HCT116 (cell line): ENCODE measurements at regions of chr17 and their contacts with region 1.

Region 1: DNA sequence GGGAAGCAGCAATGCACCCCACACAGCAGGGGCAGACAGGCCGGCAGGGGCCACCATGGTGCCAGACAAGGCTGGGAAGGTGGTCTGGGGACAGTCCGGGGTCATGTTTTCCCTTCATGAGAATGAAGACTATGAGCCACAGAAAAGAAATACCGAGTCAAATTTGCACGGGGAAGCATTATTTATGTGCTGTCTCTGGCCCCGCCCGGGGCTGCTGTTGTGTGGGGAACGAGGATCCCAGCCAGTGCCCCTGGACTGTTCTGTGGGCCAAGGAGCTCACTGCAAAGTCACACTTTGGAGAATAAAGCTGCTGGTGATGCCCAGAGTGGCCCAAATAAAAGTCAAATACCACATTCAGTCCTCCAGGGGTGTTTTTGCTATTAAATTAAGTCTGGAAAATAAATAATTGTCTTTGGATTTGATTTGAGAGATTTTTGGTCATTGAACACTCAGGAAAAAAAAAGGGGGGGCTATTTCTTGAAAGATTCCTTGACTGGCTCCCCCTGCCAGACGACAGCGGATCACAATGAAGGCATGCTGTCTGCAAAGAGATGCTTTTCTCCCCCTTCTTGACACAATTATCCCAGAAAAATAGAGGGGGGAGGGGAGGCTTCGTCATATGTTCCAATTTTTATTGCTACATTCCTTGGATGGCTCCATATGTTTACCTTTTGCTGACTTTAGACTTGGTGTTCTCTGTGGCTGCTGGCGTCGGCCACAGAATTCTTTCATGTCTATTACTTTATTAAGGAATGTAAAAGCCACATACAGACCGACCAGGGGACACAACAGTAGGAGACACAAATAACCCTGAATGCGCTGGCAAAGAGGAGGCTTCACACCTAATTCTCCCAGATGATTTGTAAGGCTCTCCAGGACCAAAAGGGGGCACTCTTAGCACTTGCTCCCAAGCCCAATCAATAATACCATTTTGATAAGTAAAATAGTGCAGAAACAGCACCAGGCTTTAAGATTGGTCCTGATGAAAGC is 27.1 kb upstream of the ANKFN1 start:
- DNase-seq: peak; percentile 52
- ATAC-seq: peak; percentile 75
- H3K4me3 ChIP-seq: no peak overlapping the region
- H3K27ac ChIP-seq: no peak overlapping the region
- H3K4me1 ChIP-seq: no peaks in the 10 kb centered on the region
- H3K27me3 ChIP-seq: peaks cover 30% of the 10 kb centered on the region
- CTCF ChIP-seq: peak; percentile 63 to 81 (median 74); a peak in 5 of 6 replicates
- POLR2A ChIP-seq: no peak
- RAD21 ChIP-seq: peak; percentile 74

Region 2: DNA sequence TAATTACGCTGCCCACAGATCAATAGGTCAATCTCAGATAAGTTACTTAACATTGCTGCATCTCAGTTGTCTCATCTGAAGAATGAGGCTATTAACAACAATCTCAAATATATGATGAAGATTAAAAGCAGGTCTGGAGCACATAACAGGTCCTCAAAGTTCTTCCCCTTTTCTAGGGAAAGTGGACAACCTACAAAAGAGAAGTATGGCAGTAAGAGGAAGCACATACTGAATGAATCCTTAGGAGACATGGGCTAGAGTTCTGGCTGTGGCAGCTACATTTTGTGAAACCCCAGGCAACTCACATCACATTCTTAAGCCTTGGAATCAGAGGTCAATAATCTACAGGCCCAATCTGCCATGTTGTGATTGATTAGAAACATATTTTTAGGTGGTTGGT is 194.7 kb before region 1 on chr17:
- CTCF ChIA-PET with region 1: no interaction called
- POLR2A ChIA-PET with region 1: no interaction called
- RAD21 ChIA-PET with region 1: no interaction called
- intact Hi-C with region 1: no loop called
- DNase-seq: no peak
- ATAC-seq: no peak
- H3K4me3 ChIP-seq: no peak overlapping the region
- H3K27ac ChIP-seq: no peak overlapping the region
- H3K4me1 ChIP-seq: no peaks in the 10 kb centered on the region
- H3K27me3 ChIP-seq: peaks cover 6% of the 10 kb centered on the region
- CTCF ChIP-seq: no peak
- POLR2A ChIP-seq: no peak
- RAD21 ChIP-seq: no peak

Region 3: DNA sequence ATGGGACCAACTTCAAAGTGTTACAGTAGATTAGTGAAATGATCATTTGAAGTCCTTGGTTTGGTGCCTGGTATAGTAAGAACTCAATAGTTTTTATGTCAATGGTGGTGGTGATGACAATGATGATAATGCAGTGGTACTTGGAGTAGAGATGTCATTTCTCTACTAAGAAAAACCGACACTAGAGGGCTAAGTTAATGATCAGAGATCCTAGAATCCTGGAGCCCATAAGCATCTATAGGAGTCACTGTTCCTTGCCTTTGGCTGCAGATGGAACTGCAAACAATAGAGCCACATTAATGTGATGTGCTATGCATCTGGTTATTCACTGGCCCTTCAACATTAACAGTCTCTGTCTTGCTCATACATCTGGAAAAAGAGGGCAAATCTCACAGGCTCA is 131.0 kb after region 1 on chr17:
- CTCF ChIA-PET with region 1: no interaction called
- POLR2A ChIA-PET with region 1: no interaction called
- RAD21 ChIA-PET with region 1: no interaction called
- intact Hi-C with region 1: no loop called
- DNase-seq: no peak
- ATAC-seq: peak; percentile 69
- H3K4me3 ChIP-seq: no peak overlapping the region
- H3K27ac ChIP-seq: no peak overlapping the region
- H3K4me1 ChIP-seq: no peaks in the 10 kb centered on the region
- H3K27me3 ChIP-seq: peaks cover 3% of the 10 kb centered on the region; the same call in 1 of the 2 replicates
- CTCF ChIP-seq: peak in 1 of 3 experiments; percentile 21; a peak in 1 of 6 replicates
- POLR2A ChIP-seq: no peak
- RAD21 ChIP-seq: no peak

Region 4: GRCh38 chr17:56269556-56270389 is 143.6 kb after region 1 on chr17:
- CTCF ChIA-PET with region 1: no interaction called
- POLR2A ChIA-PET with region 1: no interaction called
- RAD21 ChIA-PET with region 1: no interaction called
- intact Hi-C with region 1: no loop called
- DNase-seq: no peak
- ATAC-seq: no peak
- H3K4me3 ChIP-seq: no peak overlapping the region
- H3K27ac ChIP-seq: no peak overlapping the region
- H3K4me1 ChIP-seq: no peaks in the 10 kb centered on the region
- H3K27me3 ChIP-seq: peaks cover 2% of the 10 kb centered on the region; the same call in 1 of the 2 replicates
- CTCF ChIP-seq: no peak
- POLR2A ChIP-seq: no peak
- RAD21 ChIP-seq: no peak

Region 5: GRCh38 chr17:56478836-56479447 is 352.8 kb after region 1 on chr17:
- CTCF ChIA-PET with region 1: interaction called, 4 read pairs
- POLR2A ChIA-PET with region 1: no interaction called
- RAD21 ChIA-PET with region 1: no interaction called
- intact Hi-C with region 1: loop called (anchors 1 kb)
- DNase-seq: peak; percentile 58
- ATAC-seq: peak; percentile 94
- H3K4me3 ChIP-seq: no peak overlapping the region
- H3K27ac ChIP-seq: no peak overlapping the region
- H3K4me1 ChIP-seq: no peaks in the 10 kb centered on the region
- H3K27me3 ChIP-seq: peaks cover 30% of the 10 kb centered on the region
- CTCF ChIP-seq: peak; percentile 54 to 84 (median 71)
- POLR2A ChIP-seq: no peak
- RAD21 ChIP-seq: peak; percentile 56